SK-N-SH (cell line): ENCODE measurements at regions of chr3 and their contacts with region 1.

Region 1: GRCh38 chr3:94303897-94304296 is 241.0 kb downstream of the NSUN3 start:
- DNase-seq: no peak
- H3K4me3 ChIP-seq: no peak overlapping the region
- H3K27ac ChIP-seq: no peak overlapping the region
- H3K4me1 ChIP-seq: no peaks in the 10 kb centered on the region; a peak in 1 of 4 replicates
- H3K27me3 ChIP-seq: no peaks in the 10 kb centered on the region
- CTCF ChIP-seq: peak; percentile 40
- EP300 ChIP-seq: no peak
- RAD21 ChIP-seq: peak; percentile 51

Region 2: GRCh38 chr3:94115482-94115881 is 188.4 kb before region 1 on chr3:
- CTCF ChIA-PET with region 1: interaction called, 11 read pairs
- POLR2A ChIA-PET with region 1: no interaction called
- DNase-seq: peak; percentile 27
- H3K4me3 ChIP-seq: no peak overlapping the region
- H3K27ac ChIP-seq: peak overlapping the region in 1 of 2 experiments; percentile 84; a peak in 2 of 4 replicates
- H3K4me1 ChIP-seq: peaks cover 17 to 27% of the 10 kb centered on the region in 2 experiments; a peak in 3 of 4 replicates
- H3K27me3 ChIP-seq: no peaks in the 10 kb centered on the region
- CTCF ChIP-seq: peak; percentile 79
- EP300 ChIP-seq: no peak; a peak in 1 of 4 replicates
- RAD21 ChIP-seq: peak; percentile 93